AG04450 (cell line): ENCODE measurements at regions of chr12 and their contacts with region 1.

Region 1: GRCh38 chr12:53500776-53501614 is at the start of gene TARBP2:
- DNase-seq: peak; percentile 99
- H3K4me3 ChIP-seq: peak within 1 kb of the TSS; percentile 87
- H3K27ac ChIP-seq: peak within 1 kb of the TSS; percentile 99
- H3K27me3 ChIP-seq: no peaks in the 10 kb centered on the region
- CTCF ChIP-seq: no peak
- polyA plus RNA-seq, gene TARBP2: 25.0 and 33.0 TPM in 2 replicates

Region 2: DNA sequence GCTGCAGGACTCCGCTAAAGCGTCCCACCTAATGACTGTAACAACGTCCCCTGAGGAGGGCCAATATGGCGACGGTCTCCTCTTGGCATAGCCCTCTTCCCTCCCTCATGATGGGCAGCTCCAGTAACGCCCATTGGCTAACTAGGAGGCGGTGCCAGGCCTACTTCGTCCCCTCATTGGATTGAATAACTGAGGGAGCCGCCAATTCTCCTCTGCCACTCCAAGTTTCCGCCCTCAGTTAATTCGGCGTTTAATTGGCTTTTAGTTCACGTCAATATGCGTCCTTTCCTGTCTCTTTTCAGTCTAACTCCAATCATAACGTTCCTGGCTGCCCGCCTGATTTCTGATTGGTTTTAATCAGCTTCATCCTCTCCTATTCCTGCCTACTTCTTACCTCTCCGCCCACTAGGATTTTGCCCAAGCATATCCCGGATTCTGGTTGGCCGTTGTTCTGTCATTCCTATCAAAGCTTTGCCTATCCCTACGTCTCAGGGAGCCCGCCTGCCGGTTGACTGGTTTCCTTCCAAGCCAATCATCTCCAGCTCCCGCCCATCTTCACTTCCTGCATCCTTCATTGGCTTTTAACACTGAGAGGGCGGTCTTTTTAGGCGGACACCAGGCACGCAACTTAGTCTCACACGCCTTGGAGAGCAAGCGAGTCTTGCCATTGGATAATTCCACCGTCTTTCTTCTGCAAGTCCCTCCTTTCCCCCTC is 121.4 kb before region 1 on chr12:
- CTCF ChIA-PET with region 1: no interaction called
- POLR2A ChIA-PET with region 1: interaction called, 16 read pairs
- DNase-seq: peak; percentile 100
- H3K4me3 ChIP-seq: peak overlapping the region; percentile 68
- H3K27ac ChIP-seq: peak overlapping the region; percentile 81
- H3K27me3 ChIP-seq: no peaks in the 10 kb centered on the region
- CTCF ChIP-seq: no peak

Region 3: GRCh38 chr12:53481957-53482586 is 18.9 kb before region 1 on chr12:
- CTCF ChIA-PET with region 1: no interaction called
- POLR2A ChIA-PET with region 1: interaction called, 50 read pairs
- DNase-seq: no peak
- H3K4me3 ChIP-seq: no peak overlapping the region
- H3K27ac ChIP-seq: peak overlapping the region; percentile 52
- H3K27me3 ChIP-seq: no peaks in the 10 kb centered on the region
- CTCF ChIP-seq: peak; percentile 31